CD4-positive, alpha-beta T cell (primary cell): ENCODE measurements at regions of chr17 and their contacts with region 1.

Region 1: DNA sequence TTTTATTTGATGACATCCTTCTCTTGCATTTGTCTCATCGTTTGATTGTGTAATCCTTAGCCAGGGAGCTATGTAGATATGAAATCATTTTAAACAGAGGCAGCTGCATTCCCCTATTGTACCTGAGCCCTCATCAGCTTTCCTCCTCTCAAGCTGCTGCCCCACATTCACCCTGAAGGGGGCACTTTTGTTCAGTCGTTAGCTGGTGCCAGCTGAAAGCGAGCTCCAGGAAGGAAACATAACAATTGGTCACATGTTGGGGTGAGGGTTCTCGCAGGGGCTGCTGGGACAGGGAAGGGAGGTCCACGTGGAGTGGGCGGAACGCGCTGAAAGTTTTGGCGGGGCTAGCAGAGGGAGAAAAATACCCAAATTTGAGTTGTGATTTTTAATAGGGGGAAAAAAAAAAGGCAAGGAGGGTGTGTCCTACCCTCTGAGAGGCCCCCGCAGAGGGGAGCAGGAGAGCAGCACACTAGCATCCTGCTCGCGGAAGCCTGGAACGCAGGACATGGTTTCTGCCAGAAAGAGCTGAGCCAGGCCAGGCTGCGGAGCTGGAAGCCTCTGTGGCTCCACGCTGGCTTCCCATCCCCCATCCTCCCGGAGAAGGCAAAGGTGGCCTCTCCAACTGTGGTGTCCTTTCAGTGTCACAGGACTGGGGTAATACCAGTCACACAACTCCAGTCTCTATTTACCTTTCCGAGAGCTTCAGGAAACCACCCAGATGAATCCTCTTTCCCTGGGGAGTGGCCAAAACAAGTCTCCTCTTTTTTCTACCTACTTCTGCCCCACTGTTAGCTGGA is 8.5 kb upstream of the MSL1 start:
- DNase-seq: peak; percentile 85 to 96 (median 91)
- ATAC-seq: peak; percentile 75
- H3K4me3 ChIP-seq: peak overlapping the region; percentile 49
- H3K4me3 Mint-ChIP-seq: peak overlapping the region; percentile 84
- H3K27ac ChIP-seq: peak overlapping the region; percentile 13 to 50
- H3K27ac Mint-ChIP-seq: peak overlapping the region; percentile 99
- H3K4me1 ChIP-seq: peaks cover 58% of the 10 kb centered on the region
- H3K4me1 Mint-ChIP-seq: peaks cover 56% of the 10 kb centered on the region
- H3K27me3 ChIP-seq: no peaks in the 10 kb centered on the region
- H3K27me3 Mint-ChIP-seq: no peaks in the 10 kb centered on the region
- CTCF ChIP-seq: peak; percentile 72

Region 2: DNA sequence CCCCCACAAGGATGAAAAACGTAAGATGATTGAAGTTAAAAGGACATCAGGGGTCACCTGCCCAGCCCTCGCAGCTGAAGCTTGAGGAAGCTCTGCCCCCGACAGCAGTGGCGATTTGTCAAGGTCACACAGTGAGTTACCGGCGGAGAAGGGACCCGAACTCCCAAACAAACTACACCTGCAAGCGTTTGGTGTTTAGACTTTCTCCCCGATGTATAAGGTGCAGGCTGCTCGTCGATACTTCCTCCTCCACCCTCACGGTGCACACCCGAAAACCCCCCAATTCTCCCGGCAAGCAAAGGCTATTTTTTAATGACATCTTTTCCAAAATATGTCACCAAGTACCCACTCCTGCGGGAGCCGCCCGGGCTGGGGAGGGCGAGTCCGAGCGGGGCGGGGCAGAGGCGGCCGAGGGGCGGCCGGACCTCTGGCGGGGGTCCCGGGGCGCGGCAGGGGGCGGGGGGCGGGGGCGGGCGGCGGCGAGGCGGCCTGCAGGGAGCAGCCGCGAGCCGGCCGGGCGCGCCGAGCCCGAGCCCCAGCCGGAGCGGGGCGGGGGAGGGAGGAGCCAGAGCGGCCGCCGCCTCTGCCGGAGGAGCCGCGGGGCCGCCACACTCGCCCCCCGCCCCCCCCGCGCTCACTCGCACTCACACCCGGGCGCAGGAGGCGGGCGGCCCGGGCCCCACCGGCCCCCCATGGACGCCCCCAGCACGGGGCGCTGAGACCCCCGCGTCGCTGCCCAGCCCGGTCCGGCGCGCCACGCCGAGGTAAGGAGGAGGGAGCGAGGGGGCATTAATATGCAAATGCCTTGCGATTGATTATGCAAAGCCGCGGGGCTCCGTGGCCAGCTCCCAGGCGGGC is 50.8 kb before region 1 on chr17 and contains the start of gene THRA:
- CTCF ChIA-PET with region 1: interaction called, 38 read pairs
- POLR2A ChIA-PET with region 1: interaction called, 48 read pairs
- intact Hi-C with region 1: loop called (anchors 2 to 5 kb)
- DNase-seq: peak; percentile 44 to 90 (median 72)
- ATAC-seq: peak; percentile 88
- H3K4me3 ChIP-seq: peak within 1 kb of the TSS; percentile 86
- H3K4me3 Mint-ChIP-seq: peak within 1 kb of the TSS; percentile 93
- H3K27ac ChIP-seq: peak within 1 kb of the TSS in 1 of 2 donors; percentile 69
- H3K27ac Mint-ChIP-seq: peak within 1 kb of the TSS; percentile 96
- H3K4me1 ChIP-seq: peaks cover 49% of the 10 kb centered on the region
- H3K4me1 Mint-ChIP-seq: peaks cover 50% of the 10 kb centered on the region
- H3K27me3 ChIP-seq: peaks cover 0 to 6% of the 10 kb centered on the region in 2 experiments
- H3K27me3 Mint-ChIP-seq: no peaks in the 10 kb centered on the region
- CTCF ChIP-seq: no peak
- total RNA-seq, gene THRA: 35.2 to 36.4 TPM

Region 3: DNA sequence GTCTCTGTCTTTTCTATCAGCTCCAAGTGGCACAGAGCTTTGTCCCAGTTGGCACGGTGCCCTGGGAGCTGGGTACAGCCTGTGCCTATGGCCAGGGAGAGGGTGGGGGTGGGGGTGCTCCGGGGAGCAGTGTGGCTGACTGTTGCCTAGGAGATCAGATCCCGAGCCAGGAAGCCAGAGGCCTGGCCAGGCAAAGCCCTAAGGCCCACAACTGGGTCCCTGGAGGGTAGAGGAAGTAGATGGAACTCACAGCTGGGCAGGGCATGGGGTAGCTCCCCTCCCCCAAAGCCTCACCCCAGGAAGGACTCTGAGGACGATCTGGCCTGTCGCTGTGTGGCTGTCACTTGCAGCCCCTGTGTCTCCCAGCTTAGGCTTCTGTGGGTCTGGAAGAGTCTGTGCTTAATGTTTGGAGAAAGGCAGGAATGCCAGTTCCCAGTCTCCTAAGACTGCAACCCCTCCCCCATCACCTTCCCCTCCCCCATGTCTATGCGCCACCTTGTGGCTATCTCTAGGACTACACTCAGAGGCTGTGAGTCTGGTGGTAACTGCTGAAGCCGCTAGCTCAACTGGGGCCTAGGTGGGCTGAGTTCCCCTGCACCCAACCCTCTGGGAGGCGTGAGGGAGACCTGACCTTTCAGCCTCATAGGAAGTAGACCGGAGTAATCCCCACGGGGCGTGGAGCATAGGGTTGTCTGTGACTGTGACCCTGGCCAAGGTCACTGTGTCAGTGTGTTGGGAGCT is 37.9 kb before region 1 on chr17:
- CTCF ChIA-PET with region 1: interaction called, 49 read pairs
- POLR2A ChIA-PET with region 1: interaction called, 18 read pairs
- intact Hi-C with region 1: loop called in 1 of 2 experiments (anchors 1 kb)
- DNase-seq: peak; percentile 58 to 82 (median 66)
- ATAC-seq: peak; percentile 91
- H3K4me3 ChIP-seq: no peak overlapping the region
- H3K4me3 Mint-ChIP-seq: no peak overlapping the region
- H3K27ac ChIP-seq: no peak overlapping the region
- H3K27ac Mint-ChIP-seq: peak overlapping the region; percentile 10
- H3K4me1 ChIP-seq: peaks cover 47% of the 10 kb centered on the region
- H3K4me1 Mint-ChIP-seq: peaks cover 50% of the 10 kb centered on the region
- H3K27me3 ChIP-seq: no peaks in the 10 kb centered on the region
- H3K27me3 Mint-ChIP-seq: no peaks in the 10 kb centered on the region
- CTCF ChIP-seq: peak; percentile 89

Region 4: DNA sequence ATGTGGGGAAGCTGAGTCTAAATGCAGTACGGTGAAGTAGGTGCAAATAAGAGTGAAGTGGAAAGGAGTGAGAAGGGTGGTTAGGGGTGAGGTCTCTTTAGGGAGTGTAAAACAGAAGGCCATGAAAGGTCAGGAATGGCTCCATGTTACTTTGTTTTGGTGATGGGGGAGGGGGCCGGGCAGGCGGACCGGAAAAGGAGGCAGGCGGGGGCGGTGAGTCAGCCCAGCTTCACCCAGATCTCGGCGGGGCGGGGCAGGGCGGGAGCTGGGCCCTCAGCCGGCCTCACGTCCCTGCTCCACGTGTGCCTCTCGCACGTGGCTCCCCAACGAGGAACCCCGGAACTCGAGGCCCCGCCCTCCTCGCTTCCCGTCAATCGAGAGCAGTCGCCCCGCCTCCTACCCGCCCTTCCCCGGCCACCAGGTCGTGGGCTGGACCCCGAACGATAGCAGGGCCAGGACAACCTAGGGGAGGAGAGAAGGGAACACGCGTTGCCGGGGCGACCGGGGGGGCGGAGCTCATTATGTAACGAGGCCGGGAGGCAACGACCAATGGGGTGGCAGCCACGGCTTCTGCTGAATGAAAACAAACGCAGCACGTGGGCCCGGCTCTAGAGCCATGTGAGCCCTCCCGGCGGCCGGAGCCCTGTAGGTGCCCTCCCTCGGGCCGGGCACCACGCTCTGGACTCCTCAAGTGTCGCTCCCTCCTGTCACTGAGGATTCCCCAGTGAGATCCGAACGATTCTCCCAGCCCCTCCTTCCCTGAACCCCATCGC is 14.3 kb before region 1 on chr17:
- CTCF ChIA-PET with region 1: interaction called, 93 read pairs
- POLR2A ChIA-PET with region 1: interaction called, 335 read pairs
- intact Hi-C with region 1: loop called (anchors 1 to 2 kb)
- DNase-seq: peak; percentile 99 to 100 (median 99)
- ATAC-seq: peak; percentile 63
- H3K4me3 ChIP-seq: peak overlapping the region; percentile 85
- H3K4me3 Mint-ChIP-seq: peak overlapping the region; percentile 97
- H3K27ac ChIP-seq: peak overlapping the region; percentile 94 to 96
- H3K27ac Mint-ChIP-seq: peak overlapping the region; percentile 91
- H3K4me1 ChIP-seq: peaks cover 97% of the 10 kb centered on the region
- H3K4me1 Mint-ChIP-seq: peaks cover 90% of the 10 kb centered on the region
- H3K27me3 ChIP-seq: no peaks in the 10 kb centered on the region
- H3K27me3 Mint-ChIP-seq: no peaks in the 10 kb centered on the region
- CTCF ChIP-seq: no peak

Region 5: GRCh38 chr17:40148527-40148926 is 35.2 kb after region 1 on chr17:
- CTCF ChIA-PET with region 1: interaction called, 11 read pairs
- POLR2A ChIA-PET with region 1: interaction called, 7 read pairs
- intact Hi-C with region 1: no loop called
- DNase-seq: no peak
- ATAC-seq: no peak
- H3K4me3 ChIP-seq: no peak overlapping the region
- H3K4me3 Mint-ChIP-seq: no peak overlapping the region
- H3K27ac ChIP-seq: no peak overlapping the region
- H3K27ac Mint-ChIP-seq: no peak overlapping the region
- H3K4me1 ChIP-seq: peaks cover 24% of the 10 kb centered on the region
- H3K4me1 Mint-ChIP-seq: peaks cover 56% of the 10 kb centered on the region
- H3K27me3 ChIP-seq: no peaks in the 10 kb centered on the region
- H3K27me3 Mint-ChIP-seq: no peaks in the 10 kb centered on the region
- CTCF ChIP-seq: no peak

Region 6: DNA sequence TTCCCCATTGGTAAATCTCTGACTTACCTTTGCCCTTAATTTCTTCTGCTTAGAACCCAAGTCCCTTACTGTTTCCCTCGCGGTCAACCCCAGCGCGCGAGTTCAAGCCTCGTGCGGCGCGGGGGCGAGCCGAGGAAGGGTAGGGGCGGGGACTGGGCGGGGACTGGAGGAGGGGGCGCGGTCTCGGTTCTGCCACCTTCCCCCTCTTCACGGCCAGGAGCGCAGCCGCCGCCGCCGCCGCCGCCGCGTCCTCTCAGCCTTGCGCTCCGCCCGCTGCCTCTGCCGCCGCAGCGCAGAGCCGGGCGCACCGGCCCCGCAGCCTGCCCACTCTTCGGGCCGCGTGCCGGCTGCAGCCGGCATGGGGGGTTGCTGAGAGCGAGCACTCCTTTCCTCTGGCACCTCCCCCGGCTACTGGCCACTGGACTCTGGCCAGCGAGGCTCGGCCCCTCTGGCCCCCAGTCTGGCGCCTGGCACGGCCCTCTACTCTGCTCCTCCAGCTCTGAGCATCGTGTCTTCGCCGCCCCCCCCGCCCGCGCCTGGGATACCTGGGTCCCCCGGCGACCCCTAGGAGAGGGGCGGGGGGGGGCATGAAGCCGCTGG is 64.1 kb after region 1 on chr17 and contains the start of gene RAPGEFL1:
- CTCF ChIA-PET with region 1: interaction called, 8 read pairs
- POLR2A ChIA-PET with region 1: interaction called, 4 read pairs
- intact Hi-C with region 1: loop called in 1 of 2 experiments (anchors 2 kb)
- DNase-seq: peak; percentile 72 to 94 (median 83)
- ATAC-seq: peak; percentile 97
- H3K4me3 ChIP-seq: peak within 1 kb of the TSS; percentile 58
- H3K4me3 Mint-ChIP-seq: peak within 1 kb of the TSS; percentile 67
- H3K27ac ChIP-seq: no peak within 1 kb of the TSS
- H3K27ac Mint-ChIP-seq: no peak within 1 kb of the TSS
- H3K4me1 ChIP-seq: peaks cover 20% of the 10 kb centered on the region
- H3K4me1 Mint-ChIP-seq: peaks cover 9% of the 10 kb centered on the region
- H3K27me3 ChIP-seq: no peaks in the 10 kb centered on the region
- H3K27me3 Mint-ChIP-seq: no peaks in the 10 kb centered on the region
- CTCF ChIP-seq: no peak
- total RNA-seq, gene RAPGEFL1: 7.7 to 9.4 TPM

Region 7: DNA sequence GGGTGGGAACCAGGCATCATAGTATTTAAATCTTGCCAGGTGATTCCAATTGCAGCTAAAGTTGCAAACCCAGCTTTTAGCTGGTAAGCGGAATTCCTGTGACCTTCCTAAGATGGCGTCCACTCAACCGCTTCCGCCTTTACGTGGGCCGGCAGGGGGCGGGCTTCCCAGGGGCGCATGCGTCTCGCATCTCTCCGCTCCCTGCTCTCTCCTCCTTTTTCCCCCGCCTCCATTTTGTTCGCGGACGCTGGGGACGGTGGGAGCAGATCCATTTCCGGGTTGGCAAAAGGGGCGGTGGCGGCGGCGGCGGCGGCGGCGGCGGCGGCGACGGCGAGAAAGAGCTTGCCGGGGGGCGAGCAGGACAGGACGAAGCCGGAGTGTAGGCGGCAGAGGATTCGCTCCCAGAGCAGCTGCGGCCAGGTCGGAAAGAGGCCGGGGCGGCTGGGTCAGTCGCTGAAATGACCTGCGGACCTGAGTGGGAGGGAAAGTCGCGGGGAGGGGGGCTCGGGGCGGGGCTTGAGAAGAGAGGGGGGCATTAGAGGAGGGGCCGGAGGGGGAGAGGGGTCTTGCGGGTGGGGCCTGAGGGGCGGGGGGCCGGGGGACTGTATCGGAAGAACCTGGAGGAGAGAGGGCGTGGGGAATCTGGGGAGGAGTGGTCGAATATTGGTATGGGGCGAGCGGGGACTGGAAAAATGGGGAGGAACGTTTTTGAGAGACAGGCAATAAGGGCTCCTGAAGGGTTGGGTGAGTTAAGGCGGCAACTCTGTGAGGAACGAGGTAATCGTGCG is 106.0 kb after region 1 on chr17 and contains the start of gene WIPF2:
- CTCF ChIA-PET with region 1: interaction called, 12 read pairs
- POLR2A ChIA-PET with region 1: interaction called, 9 read pairs
- intact Hi-C with region 1: no loop called
- DNase-seq: peak; percentile 91 to 98 (median 95)
- ATAC-seq: peak; percentile 90
- H3K4me3 ChIP-seq: peak within 1 kb of the TSS; percentile 58
- H3K4me3 Mint-ChIP-seq: peak within 1 kb of the TSS; percentile 94
- H3K27ac ChIP-seq: peak within 1 kb of the TSS; percentile 86 to 97
- H3K27ac Mint-ChIP-seq: peak within 1 kb of the TSS; percentile 88
- H3K4me1 ChIP-seq: peaks cover 25% of the 10 kb centered on the region
- H3K4me1 Mint-ChIP-seq: peaks cover 34% of the 10 kb centered on the region
- H3K27me3 ChIP-seq: no peaks in the 10 kb centered on the region
- H3K27me3 Mint-ChIP-seq: no peaks in the 10 kb centered on the region
- CTCF ChIP-seq: peak; percentile 62
- total RNA-seq, gene WIPF2: 17.3 to 21.3 TPM

Region 8: DNA sequence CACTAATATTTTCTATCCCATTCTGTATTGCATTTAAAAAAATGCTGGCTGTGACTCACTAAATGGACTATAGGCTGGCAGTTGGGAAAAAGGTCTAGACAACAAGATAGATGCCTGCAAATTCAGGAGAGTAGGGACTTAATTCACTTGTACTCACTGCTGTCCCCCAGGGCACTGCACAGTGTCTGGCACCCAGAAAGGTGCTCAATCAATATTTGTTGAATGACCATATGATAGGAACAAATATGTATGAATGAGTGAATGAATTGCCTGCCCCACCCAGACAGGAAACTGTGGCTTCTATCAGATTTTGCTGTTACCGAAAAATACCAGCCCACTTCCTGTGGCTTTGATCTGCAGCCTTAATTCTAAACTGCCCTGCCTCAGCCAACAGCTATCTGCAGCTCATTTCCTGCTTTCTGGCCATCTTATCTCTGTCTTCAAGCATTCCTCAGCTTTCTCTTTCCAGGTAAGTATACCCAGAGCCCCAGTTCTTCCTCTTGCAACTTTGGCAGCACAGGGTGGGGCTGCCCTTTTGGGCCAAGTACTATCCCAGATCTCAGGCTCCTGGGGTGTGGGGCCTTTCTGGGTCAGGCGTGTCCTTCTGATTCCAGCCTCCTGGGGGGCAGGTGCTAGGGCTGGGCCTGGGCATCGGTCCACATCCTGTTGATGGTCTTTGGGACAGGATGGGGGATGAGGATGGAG is 403.4 kb after region 1 on chr17:
- CTCF ChIA-PET with region 1: no interaction called
- POLR2A ChIA-PET with region 1: no interaction called
- intact Hi-C with region 1: no loop called
- DNase-seq: peak in 13 of 14 experiments; percentile 40 to 94 (median 64)
- ATAC-seq: peak; percentile 72
- H3K4me3 ChIP-seq: peak overlapping the region; percentile 51
- H3K4me3 Mint-ChIP-seq: peak overlapping the region; percentile 83
- H3K27ac ChIP-seq: no peak overlapping the region
- H3K27ac Mint-ChIP-seq: peak overlapping the region; percentile 86
- H3K4me1 ChIP-seq: peaks cover 79% of the 10 kb centered on the region
- H3K4me1 Mint-ChIP-seq: peaks cover 57% of the 10 kb centered on the region
- H3K27me3 ChIP-seq: no peaks in the 10 kb centered on the region
- H3K27me3 Mint-ChIP-seq: no peaks in the 10 kb centered on the region
- CTCF ChIP-seq: no peak